ENCODE measurements at regions of chr7 and their contacts with region 1.

Region 1: GRCh38 chr7:36670585-36671431 is 53.5 kb downstream of the AOAH start:
- DNase-seq: peak; percentile 47 to 71 (median 65)
- H3K4me3 ChIP-seq: no peak overlapping the region
- H3K4me3 Mint-ChIP-seq: peak overlapping the region in 3 of 7 donors; percentile 30 to 56 (median 50)
- H3K27ac ChIP-seq: no peak overlapping the region
- H3K27ac Mint-ChIP-seq: peak overlapping the region in 7 of 8 donors; percentile 60 to 91 (median 87)
- H3K4me1 ChIP-seq: no peaks in the 10 kb centered on the region
- H3K4me1 Mint-ChIP-seq: peaks cover 31 to 64% (median 52%) of the 10 kb centered on the region in 3 donors
- H3K27me3 ChIP-seq: no peaks in the 10 kb centered on the region
- H3K27me3 Mint-ChIP-seq: peaks cover 0 to 2% of the 10 kb centered on the region in 2 donors

Region 2: DNA sequence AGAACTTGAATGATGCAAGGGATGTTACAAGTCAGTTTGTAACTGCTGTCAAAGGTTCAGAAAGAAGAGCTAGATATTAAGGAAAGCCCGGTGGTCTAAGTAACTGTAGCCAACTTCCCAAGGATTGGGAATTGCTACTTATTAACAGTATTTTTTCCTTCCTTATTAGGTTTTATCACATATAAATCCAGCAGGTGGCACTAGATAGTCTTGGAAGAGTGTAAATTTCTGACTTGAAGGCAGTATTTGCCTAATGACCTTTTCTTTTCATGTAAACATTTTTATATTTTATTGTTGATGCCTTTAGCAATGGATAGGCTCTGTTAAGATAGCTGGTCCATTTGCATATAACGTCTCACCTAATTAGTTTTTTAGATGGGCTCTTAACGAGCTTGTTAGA is 229.9 kb before region 1 on chr7:
- CTCF ChIA-PET with region 1: interaction called, 12 read pairs
- POLR2A ChIA-PET with region 1: no interaction called
- DNase-seq: no peak
- H3K4me3 ChIP-seq: no peak overlapping the region
- H3K4me3 Mint-ChIP-seq: no peak overlapping the region
- H3K27ac ChIP-seq: no peak overlapping the region
- H3K27ac Mint-ChIP-seq: no peak overlapping the region
- H3K4me1 ChIP-seq: no peaks in the 10 kb centered on the region
- H3K4me1 Mint-ChIP-seq: no peaks in the 10 kb centered on the region
- H3K27me3 ChIP-seq: no peaks in the 10 kb centered on the region
- H3K27me3 Mint-ChIP-seq: no peaks in the 10 kb centered on the region

Region 3: GRCh38 chr7:36487756-36488336 is 183.0 kb before region 1 on chr7:
- CTCF ChIA-PET with region 1: interaction called, 78 read pairs
- POLR2A ChIA-PET with region 1: no interaction called
- DNase-seq: peak in 3 of 5 donors; percentile 16 to 59 (median 53)
- H3K4me3 ChIP-seq: no peak overlapping the region
- H3K4me3 Mint-ChIP-seq: no peak overlapping the region
- H3K27ac ChIP-seq: no peak overlapping the region
- H3K27ac Mint-ChIP-seq: no peak overlapping the region
- H3K4me1 ChIP-seq: no peaks in the 10 kb centered on the region
- H3K4me1 Mint-ChIP-seq: peaks cover 0 to 4% (median 2%) of the 10 kb centered on the region in 3 donors
- H3K27me3 ChIP-seq: no peaks in the 10 kb centered on the region
- H3K27me3 Mint-ChIP-seq: peaks cover 0 to 3% of the 10 kb centered on the region in 2 donors

Region 4: DNA sequence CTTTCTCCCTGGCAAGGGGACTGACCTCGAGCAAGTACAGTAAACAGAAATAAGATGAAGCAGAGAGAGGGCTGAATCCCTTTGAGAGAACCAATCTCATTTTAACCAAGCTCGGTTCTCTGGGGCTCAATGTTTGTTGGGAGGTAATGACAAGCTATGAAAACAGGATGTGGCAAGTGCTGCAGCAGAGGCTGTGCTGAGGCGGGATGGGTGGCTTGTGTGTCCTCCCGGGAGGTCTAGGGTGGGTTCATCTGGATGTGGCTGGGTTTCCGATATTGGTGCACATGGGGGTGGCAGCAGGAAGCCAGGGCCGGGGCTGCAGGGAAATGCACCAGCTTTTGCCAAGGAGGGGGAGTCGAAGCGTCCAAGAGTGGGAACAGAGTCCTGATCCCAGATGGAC is 31.0 kb before region 1 on chr7:
- CTCF ChIA-PET with region 1: interaction called, 21 read pairs
- POLR2A ChIA-PET with region 1: interaction called, 5 read pairs
- DNase-seq: peak; percentile 18 to 78 (median 62)
- H3K4me3 ChIP-seq: peak overlapping the region; percentile 21
- H3K4me3 Mint-ChIP-seq: peak overlapping the region in 6 of 7 donors; percentile 57 to 82 (median 78)
- H3K27ac ChIP-seq: peak overlapping the region; percentile 29
- H3K27ac Mint-ChIP-seq: peak overlapping the region; percentile 53 to 99 (median 90)
- H3K4me1 ChIP-seq: peaks cover 64% of the 10 kb centered on the region
- H3K4me1 Mint-ChIP-seq: peaks cover 78 to 98% (median 95%) of the 10 kb centered on the region in 3 donors
- H3K27me3 ChIP-seq: no peaks in the 10 kb centered on the region
- H3K27me3 Mint-ChIP-seq: no peaks in the 10 kb centered on the region

Region 5: DNA sequence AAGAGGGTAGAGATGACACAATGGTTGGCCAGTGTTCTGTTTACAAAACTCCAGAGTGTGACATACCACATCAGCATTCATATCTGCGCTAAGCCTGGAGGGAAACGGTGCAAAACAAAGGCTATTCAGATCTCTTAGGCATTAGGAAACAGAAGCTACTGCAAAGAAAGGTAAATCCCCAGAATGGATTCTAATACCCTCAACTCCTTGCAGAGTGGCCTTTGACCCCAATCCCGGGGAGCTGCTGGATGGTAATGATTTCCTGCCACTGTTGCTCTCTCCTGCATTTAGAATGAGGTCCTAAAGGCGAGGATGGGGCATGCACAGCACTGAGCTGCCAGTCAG is 11.7 kb before region 1 on chr7:
- CTCF ChIA-PET with region 1: interaction called, 27 read pairs
- POLR2A ChIA-PET with region 1: no interaction called
- DNase-seq: no peak
- H3K4me3 ChIP-seq: no peak overlapping the region
- H3K4me3 Mint-ChIP-seq: no peak overlapping the region
- H3K27ac ChIP-seq: no peak overlapping the region
- H3K27ac Mint-ChIP-seq: peak overlapping the region in 6 of 8 donors; percentile 2 to 96 (median 30)
- H3K4me1 ChIP-seq: peaks cover 6% of the 10 kb centered on the region
- H3K4me1 Mint-ChIP-seq: peaks cover 30 to 62% (median 61%) of the 10 kb centered on the region in 3 donors
- H3K27me3 ChIP-seq: no peaks in the 10 kb centered on the region
- H3K27me3 Mint-ChIP-seq: no peaks in the 10 kb centered on the region

Measured in CD8-positive, alpha-beta memory T cell (primary cell).